MCF 10A (cell line): ENCODE measurements at regions of chr15 and their contacts with region 1.

Region 1: GRCh38 chr15:51907136-51907914 is 64.3 kb downstream of the LEO1 start:
- DNase-seq: peak; percentile 71
- H3K4me3 Mint-ChIP-seq: no peak overlapping the region
- H3K27ac Mint-ChIP-seq: peak overlapping the region; percentile 23
- H3K4me1 Mint-ChIP-seq: peaks cover 19% of the 10 kb centered on the region
- H3K27me3 Mint-ChIP-seq: no peaks in the 10 kb centered on the region
- CTCF ChIP-seq: peak; percentile 13

Region 2: DNA sequence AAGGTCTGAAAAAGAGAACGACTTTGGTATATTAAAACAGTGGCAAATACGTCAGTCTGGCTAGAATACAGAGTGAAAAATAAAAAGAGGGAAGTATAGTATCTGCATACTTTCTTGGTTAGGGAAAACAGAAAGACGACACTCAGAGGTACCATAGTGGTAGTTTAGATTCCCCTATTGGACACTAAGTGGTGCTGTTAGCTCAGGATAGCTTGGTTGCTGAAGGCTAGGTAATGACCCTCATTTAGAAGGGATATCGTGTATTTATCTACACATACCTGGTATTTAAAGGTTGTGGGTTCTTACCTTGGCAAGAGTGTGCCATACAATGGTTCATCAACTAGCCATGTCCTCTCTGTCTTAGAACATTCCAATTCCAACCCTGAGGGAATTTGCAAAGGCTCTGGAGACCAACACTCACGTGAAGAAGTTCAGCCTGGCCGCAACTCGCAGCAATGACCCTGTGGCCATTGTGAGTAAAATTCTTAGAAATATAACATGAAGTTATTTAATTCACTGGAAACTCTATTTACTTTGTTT is 124.9 kb before region 1 on chr15:
- CTCF ChIA-PET with region 1: interaction called, 6 read pairs
- POLR2A ChIA-PET with region 1: interaction called, 3 read pairs
- intact Hi-C with region 1: loop called (anchors 2 kb)
- DNase-seq: peak; percentile 55
- H3K4me3 Mint-ChIP-seq: no peak overlapping the region
- H3K27ac Mint-ChIP-seq: no peak overlapping the region
- H3K4me1 Mint-ChIP-seq: peaks cover 16% of the 10 kb centered on the region
- H3K27me3 Mint-ChIP-seq: no peaks in the 10 kb centered on the region
- CTCF ChIP-seq: peak; percentile 59

Region 3: GRCh38 chr15:51888593-51889195 is 18.6 kb before region 1 on chr15:
- CTCF ChIA-PET with region 1: interaction called, 18 read pairs
- POLR2A ChIA-PET with region 1: interaction called, 3 read pairs
- intact Hi-C with region 1: no loop called
- DNase-seq: peak; percentile 33
- H3K4me3 Mint-ChIP-seq: no peak overlapping the region
- H3K27ac Mint-ChIP-seq: peak overlapping the region; percentile 61
- H3K4me1 Mint-ChIP-seq: peaks cover 6% of the 10 kb centered on the region
- H3K27me3 Mint-ChIP-seq: no peaks in the 10 kb centered on the region
- CTCF ChIP-seq: peak; percentile 31

Region 4: GRCh38 chr15:52362502-52362901 is 455.2 kb after region 1 on chr15:
- CTCF ChIA-PET with region 1: no interaction called
- POLR2A ChIA-PET with region 1: no interaction called
- intact Hi-C with region 1: no loop called
- DNase-seq: peak; percentile 49
- H3K4me3 Mint-ChIP-seq: no peak overlapping the region
- H3K27ac Mint-ChIP-seq: no peak overlapping the region
- H3K4me1 Mint-ChIP-seq: no peaks in the 10 kb centered on the region
- H3K27me3 Mint-ChIP-seq: no peaks in the 10 kb centered on the region
- CTCF ChIP-seq: no peak